CD8-positive, alpha-beta memory T cell (primary cell): ENCODE measurements at regions of chr11 and their contacts with region 1.

Region 1: DNA sequence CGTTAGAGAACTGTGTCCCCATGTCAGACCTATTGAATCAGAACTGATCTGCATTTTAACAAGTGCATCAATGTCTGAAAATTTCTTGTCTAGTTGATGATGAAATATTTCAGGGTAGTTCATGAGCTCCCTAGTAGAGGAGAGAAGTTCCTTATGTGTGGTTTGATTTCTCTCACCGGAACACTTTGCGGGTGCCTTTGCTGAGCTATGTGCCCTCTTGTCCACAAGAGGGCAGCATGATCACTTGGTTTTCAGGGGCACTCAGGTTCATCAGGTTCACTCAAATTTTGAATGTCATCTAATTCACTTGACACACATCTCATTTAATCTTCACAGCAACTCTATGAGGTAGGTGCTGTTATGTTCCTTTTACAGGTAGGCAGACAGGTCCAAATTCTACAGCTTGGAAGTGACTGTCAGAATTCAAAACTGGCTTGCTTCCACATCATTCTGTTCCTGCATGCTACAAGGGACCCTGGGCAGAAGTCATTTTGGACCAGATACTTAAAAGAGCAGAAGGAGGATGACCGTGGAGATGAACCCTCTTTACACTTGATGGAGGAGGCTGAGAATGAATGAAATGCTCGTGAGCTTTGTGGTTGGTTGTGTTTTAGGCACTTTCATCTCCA is 55.6 kb downstream of the P4HA3 start:
- DNase-seq: peak; percentile 25 to 59 (median 31)
- H3K4me3 ChIP-seq: no peak overlapping the region
- H3K4me3 Mint-ChIP-seq: no peak overlapping the region
- H3K27ac ChIP-seq: no peak overlapping the region
- H3K27ac Mint-ChIP-seq: peak overlapping the region in 2 of 8 donors; percentile 4 to 43
- H3K4me1 ChIP-seq: no peaks in the 10 kb centered on the region
- H3K4me1 Mint-ChIP-seq: peaks cover 0 to 6% (median 0%) of the 10 kb centered on the region in 3 donors
- H3K27me3 ChIP-seq: no peaks in the 10 kb centered on the region
- H3K27me3 Mint-ChIP-seq: peaks cover 1 to 2% of the 10 kb centered on the region in 2 donors

Region 2: DNA sequence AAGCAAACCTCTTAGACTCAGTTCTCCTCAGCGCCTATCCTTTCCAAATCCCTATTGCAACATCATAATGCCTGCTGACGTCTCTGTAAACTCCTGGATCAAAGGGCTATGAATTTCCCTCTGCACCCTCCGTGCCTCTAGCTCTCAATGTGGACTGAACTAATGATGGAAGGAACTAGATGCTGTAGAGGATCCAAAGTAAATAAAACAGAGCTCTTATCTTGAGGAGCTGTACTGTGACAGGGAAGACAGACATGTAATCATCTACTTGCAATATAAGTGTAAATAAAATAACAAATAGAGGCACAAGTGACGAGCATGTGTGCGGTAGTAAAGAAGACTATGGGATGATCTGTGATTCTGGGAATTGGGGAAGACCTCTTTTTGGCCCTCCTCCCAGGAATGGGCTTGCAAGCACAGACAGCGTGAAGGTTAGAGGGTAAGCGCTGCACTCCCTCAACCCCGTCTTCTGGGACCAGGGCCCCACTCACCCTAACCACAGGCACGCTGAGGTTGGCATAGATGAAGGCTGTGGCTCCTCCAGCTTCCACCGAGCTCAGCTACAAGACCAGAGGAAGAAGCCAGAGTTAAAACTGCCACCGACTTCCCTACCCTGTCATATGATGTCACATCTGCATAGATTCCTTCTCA is 13.4 kb after region 1 on chr11:
- CTCF ChIA-PET with region 1: interaction called, 15 read pairs
- POLR2A ChIA-PET with region 1: no interaction called
- DNase-seq: peak in 1 of 5 donors; percentile 35
- H3K4me3 ChIP-seq: no peak overlapping the region
- H3K4me3 Mint-ChIP-seq: no peak overlapping the region
- H3K27ac ChIP-seq: no peak overlapping the region
- H3K27ac Mint-ChIP-seq: peak overlapping the region in 1 of 8 donors; percentile 55
- H3K4me1 ChIP-seq: peaks cover 13% of the 10 kb centered on the region
- H3K4me1 Mint-ChIP-seq: peaks cover 6 to 19% (median 17%) of the 10 kb centered on the region in 3 donors
- H3K27me3 ChIP-seq: no peaks in the 10 kb centered on the region
- H3K27me3 Mint-ChIP-seq: peaks cover 5 to 30% of the 10 kb centered on the region in 2 donors